ENCODE measurements at regions of chr9 and their contacts with region 1.

Region 1: GRCh38 chr9:133527444-133527920 is 2.7 kb upstream of the MYMK start:
- DNase-seq: peak in 1 of 3 donors; percentile 77
- ATAC-seq: peak in 3 of 4 donors; percentile 48 to 72 (median 62)
- H3K4me3 ChIP-seq: no peak overlapping the region
- H3K27ac ChIP-seq: no peak overlapping the region
- H3K4me1 ChIP-seq: peaks cover 0 to 7% (median 3%) of the 10 kb centered on the region in 4 donors
- H3K27me3 ChIP-seq: no peaks in the 10 kb centered on the region
- CTCF ChIP-seq: no peak
- POLR2A ChIP-seq: no peak

Region 2: DNA sequence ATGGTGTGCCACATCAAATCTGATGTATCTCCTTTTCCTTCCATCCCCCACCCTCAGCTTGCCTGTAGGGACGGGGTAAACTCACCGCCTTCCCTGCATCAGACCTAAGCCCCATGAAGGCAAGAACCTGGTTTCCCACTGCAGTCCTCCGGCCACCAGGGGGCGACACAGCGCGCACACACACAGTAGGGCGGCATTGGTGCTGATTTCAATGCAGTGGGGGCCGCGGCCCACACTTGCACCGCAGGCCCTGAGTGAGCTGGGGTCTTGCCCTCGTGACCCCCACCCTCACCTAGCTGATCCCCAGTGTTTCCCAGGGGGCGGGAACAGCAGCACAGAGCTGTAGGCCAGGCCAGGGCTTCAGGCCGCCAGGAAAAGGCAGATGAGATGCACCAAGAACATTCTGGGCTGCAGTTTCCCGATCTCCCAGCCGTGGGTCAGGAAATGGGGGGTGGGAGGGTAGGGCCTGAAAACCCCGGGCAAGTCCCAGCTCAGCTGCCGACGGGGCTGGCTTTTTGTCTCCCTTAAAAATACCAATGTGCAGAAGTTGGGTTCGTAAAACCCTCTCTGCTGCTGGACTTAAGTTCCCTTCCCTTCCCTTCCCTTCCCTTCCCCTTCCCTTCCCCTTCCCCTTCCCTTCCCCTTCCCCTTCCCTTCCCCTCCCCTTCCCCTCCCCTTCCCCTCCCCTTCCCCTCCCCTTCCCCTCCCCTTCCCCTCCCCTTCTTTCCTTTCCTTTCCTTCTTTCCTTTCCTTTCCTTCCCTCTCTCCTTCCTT is 62.2 kb after region 1 on chr9:
- intact Hi-C with region 1: loop called in 1 of 2 experiments (anchors 10 kb)
- DNase-seq: no peak
- ATAC-seq: no peak
- H3K4me3 ChIP-seq: no peak overlapping the region
- H3K27ac ChIP-seq: no peak overlapping the region
- H3K4me1 ChIP-seq: no peaks in the 10 kb centered on the region
- H3K27me3 ChIP-seq: no peaks in the 10 kb centered on the region
- CTCF ChIP-seq: peak; percentile 28 to 49 (median 32)
- POLR2A ChIP-seq: no peak

Region 3: DNA sequence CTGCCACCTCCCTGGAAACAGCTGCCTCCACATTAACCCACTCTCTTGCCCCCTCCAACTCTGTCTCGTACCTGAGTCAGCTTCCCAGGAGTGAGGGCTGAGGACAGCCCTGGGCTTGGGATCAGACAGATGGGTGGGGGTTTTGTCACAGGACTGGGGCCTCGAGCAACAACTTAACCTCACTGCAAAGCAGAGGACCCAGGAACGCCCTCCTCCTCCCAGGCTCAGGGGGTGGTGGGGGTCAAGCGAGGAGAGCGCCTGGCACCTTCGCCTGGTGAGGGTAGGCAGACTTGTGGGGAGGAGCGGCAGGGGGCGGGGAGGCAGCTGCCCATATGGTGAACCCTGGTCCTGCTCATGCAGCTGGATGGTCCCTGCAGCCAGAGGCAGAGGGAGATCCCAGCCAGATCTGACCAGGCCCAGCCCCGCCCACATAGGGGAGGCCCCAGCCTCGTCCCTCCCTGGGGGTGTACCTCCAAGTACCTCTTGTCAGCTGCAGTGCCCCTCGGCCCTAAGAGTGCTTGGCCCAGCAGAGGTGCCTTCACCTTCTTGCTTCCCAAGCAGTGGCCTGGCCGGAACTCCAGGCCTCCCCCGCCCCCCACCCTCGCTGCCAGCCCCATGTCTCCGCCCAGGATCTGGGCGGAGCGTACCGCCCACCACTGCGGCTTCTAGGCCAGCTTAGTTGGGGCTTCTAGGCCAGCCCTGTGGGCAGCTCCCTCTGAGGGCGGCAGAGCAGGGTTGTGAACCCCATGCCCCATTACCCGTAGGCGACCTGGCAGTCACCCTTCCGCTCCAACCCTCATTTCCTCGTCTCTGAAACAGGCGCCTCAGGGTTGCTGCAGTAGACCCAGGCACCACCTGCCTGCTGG is 210.5 kb after region 1 on chr9 and contains the start of gene SARDH:
- intact Hi-C with region 1: loop called in 1 of 2 experiments (anchors 10 kb)
- DNase-seq: peak; percentile 86 to 95 (median 95)
- ATAC-seq: peak; percentile 72 to 87 (median 78)
- H3K4me3 ChIP-seq: peak within 1 kb of the TSS; percentile 34 to 79 (median 77)
- H3K27ac ChIP-seq: peak within 1 kb of the TSS in 2 of 3 donors; percentile 83 to 91
- H3K4me1 ChIP-seq: peaks cover 0 to 60% (median 17%) of the 10 kb centered on the region in 4 donors
- H3K27me3 ChIP-seq: no peaks in the 10 kb centered on the region
- CTCF ChIP-seq: peak in 1 of 4 donors; percentile 11
- POLR2A ChIP-seq: peak; percentile 72
- total RNA-seq, gene SARDH: 67.3 to 183 (median 101) TPM

Measured in right lobe of liver (tissue), 6 donors.